ENCODE measurements at regions of chr11 and their contacts with region 1.

Region 1: GRCh38 chr11:11841723-11842420 is at the start of gene USP47:
- DNase-seq: peak; percentile 90
- H3K4me3 Mint-ChIP-seq: peak within 1 kb of the TSS; percentile 65
- H3K27ac Mint-ChIP-seq: peak within 1 kb of the TSS; percentile 59
- H3K4me1 Mint-ChIP-seq: peaks cover 1% of the 10 kb centered on the region
- H3K27me3 Mint-ChIP-seq: peaks cover 8% of the 10 kb centered on the region
- total RNA-seq, gene USP47: 52.0 and 54.8 TPM in 2 replicates

Region 2: GRCh38 chr11:10750838-10751580 is 1090.9 kb before region 1 on chr11 and contains the start of gene CTR9:
- intact Hi-C with region 1: loop called (anchors 2 kb)
- DNase-seq: peak; percentile 92
- H3K4me3 Mint-ChIP-seq: peak within 1 kb of the TSS; percentile 96
- H3K27ac Mint-ChIP-seq: peak within 1 kb of the TSS; percentile 87
- H3K4me1 Mint-ChIP-seq: peaks cover 38% of the 10 kb centered on the region
- H3K27me3 Mint-ChIP-seq: no peaks in the 10 kb centered on the region
- total RNA-seq, gene CTR9: 46.2 and 51.1 TPM in 2 replicates

Region 3: DNA sequence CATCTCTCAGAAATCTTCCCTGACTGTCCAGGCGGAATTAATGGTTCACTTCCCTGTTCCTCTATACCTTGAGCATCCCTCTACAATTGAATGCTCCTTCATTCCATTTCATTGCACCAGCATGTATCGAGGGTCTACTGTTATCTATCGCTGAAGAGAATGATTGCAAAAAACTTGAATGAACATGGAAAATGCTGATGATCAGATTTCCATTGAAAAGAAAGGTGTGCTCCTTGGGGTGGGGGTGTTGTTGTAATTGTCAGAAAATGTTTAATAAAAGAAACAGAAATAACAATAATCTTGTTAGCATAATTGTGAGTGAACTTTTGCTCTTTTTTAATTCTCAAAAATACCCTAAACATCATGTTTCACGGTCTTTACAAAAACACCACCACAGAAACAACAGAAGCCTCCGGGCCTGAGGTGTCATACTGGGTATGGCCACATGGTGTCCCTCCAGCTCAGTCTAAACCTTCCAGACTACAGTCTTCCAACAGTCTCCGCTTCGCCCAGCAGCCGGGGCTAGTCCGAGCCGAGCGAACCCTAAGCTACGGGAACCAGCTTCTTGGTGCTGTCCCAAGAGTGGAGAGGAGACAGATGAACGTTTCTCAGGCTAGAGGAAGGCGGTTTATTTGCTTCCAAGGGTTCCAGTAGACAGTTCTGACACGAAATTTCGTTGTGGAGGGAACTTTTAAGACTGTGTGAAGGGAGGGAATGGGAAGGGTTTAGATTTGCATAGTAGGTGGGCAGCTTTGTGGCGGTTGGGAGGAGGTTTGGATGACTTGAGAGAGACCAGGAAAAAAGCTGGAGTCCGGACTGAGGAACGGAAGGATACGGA is 908.2 kb before region 1 on chr11:
- intact Hi-C with region 1: loop called (anchors 5 kb)
- DNase-seq: peak; percentile 61
- H3K4me3 Mint-ChIP-seq: peak overlapping the region; percentile 76
- H3K27ac Mint-ChIP-seq: peak overlapping the region; percentile 65
- H3K4me1 Mint-ChIP-seq: peaks cover 22% of the 10 kb centered on the region
- H3K27me3 Mint-ChIP-seq: peaks cover 64% of the 10 kb centered on the region

Region 4: GRCh38 chr11:11880179-11880578 is 38.3 kb after region 1 on chr11:
- intact Hi-C with region 1: loop called (anchors 2 kb)
- DNase-seq: no peak
- H3K4me3 Mint-ChIP-seq: no peak overlapping the region
- H3K27ac Mint-ChIP-seq: no peak overlapping the region
- H3K4me1 Mint-ChIP-seq: peaks cover 27% of the 10 kb centered on the region
- H3K27me3 Mint-ChIP-seq: no peaks in the 10 kb centered on the region

Region 5: GRCh38 chr11:11895672-11896071 is 53.8 kb after region 1 on chr11:
- intact Hi-C with region 1: no loop called
- DNase-seq: no peak
- H3K4me3 Mint-ChIP-seq: no peak overlapping the region
- H3K27ac Mint-ChIP-seq: no peak overlapping the region
- H3K4me1 Mint-ChIP-seq: peaks cover 14% of the 10 kb centered on the region
- H3K27me3 Mint-ChIP-seq: no peaks in the 10 kb centered on the region

Region 6: DNA sequence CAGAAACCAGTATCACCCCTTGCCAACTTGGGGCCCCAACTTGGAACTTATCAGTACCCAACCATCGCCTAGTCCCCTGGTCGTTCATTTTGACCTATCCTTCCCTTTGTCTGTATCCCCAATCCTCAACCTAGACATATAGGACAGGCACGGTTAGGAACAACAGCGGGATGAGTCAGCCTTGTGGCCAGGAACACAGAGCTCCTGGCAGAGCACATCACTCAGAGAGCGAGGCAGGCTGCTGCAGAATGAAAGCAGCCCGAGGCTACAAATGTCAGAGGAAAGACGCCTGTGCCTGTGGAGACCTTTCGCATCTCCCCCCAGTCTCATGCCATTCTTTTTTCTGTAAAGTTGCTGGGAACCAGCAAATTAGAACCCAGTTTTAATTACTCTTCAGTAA is 152.0 kb after region 1 on chr11:
- intact Hi-C with region 1: no loop called
- DNase-seq: no peak
- H3K4me3 Mint-ChIP-seq: no peak overlapping the region
- H3K27ac Mint-ChIP-seq: no peak overlapping the region
- H3K4me1 Mint-ChIP-seq: peaks cover 18% of the 10 kb centered on the region
- H3K27me3 Mint-ChIP-seq: peaks cover 27% of the 10 kb centered on the region

Region 7: GRCh38 chr11:12281571-12282478 is 440.0 kb after region 1 on chr11:
- intact Hi-C with region 1: loop called (anchors 2 kb)
- DNase-seq: peak; percentile 63
- H3K4me3 Mint-ChIP-seq: no peak overlapping the region
- H3K27ac Mint-ChIP-seq: peak overlapping the region; percentile 20
- H3K4me1 Mint-ChIP-seq: peaks cover 22% of the 10 kb centered on the region
- H3K27me3 Mint-ChIP-seq: no peaks in the 10 kb centered on the region

Region 8: GRCh38 chr11:12390687-12391110 is 548.8 kb after region 1 on chr11:
- intact Hi-C with region 1: no loop called
- DNase-seq: no peak
- H3K4me3 Mint-ChIP-seq: no peak overlapping the region
- H3K27ac Mint-ChIP-seq: no peak overlapping the region
- H3K4me1 Mint-ChIP-seq: no peaks in the 10 kb centered on the region
- H3K27me3 Mint-ChIP-seq: peaks cover 3% of the 10 kb centered on the region

Region 9: DNA sequence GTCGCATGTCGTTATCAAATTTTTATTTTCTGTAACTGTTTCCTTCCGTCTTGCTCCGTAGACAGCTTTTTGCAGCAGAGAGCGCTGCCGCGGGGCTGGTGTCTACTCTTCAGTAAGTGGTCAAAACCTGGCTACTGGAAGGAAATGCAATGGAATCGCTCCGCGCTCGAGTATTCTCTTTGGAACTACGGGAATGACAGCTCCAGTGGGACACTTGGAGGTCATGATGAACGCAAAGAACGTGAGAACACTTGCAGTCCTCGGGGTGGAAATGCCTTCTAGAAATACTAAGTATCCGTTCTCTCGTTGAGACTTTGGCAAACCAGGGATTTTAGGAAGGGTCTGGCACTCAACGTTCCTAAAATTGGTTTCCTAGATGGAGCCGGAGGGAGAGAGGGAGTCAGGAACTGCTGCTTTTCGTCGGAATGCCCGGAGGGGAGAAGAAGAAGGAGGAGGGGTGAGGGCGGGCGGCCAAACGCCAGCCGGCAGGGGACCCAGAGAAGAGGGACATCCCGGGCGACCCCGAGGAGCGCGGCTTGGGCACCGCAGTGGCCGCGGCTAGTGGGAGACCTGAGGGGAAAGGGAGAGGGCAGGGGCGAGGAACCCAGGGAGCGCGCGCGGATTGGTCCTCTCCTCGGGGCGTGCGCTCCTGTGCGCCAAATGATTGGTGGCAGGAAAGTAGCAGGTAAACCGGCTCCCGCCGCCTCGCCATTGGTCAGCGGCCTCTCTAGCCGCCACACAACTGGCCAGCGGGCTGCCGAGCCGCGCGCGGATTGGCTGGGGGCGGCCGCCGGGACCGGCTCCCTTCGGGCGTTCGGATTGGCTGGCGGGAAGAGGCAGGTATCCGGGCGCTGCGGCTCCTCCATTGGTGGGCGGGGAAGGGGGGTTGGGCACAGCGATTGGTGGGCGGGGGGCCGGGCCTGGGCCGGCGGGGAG is 1435.2 kb after region 1 on chr11:
- intact Hi-C with region 1: loop called (anchors 10 kb)
- DNase-seq: peak; percentile 98
- H3K4me3 Mint-ChIP-seq: peak overlapping the region; percentile 98
- H3K27ac Mint-ChIP-seq: peak overlapping the region; percentile 80
- H3K4me1 Mint-ChIP-seq: peaks cover 52% of the 10 kb centered on the region
- H3K27me3 Mint-ChIP-seq: peaks cover 46% of the 10 kb centered on the region

Measured in activated T-helper 1 cell treated with anti-CD3 and anti-CD28 coated beads, Interleukin-12 subunit alpha, Interleukin-12 subunit beta, Interleukin-2, Interleukin-4 antibody, amounts not matched to agents 30 ng/mL and 10 ng/mL and 1 ng/mL, durations not matched to agents 14 hours and 24 hours and 36 hours (primary cell).